ENCODE measurements at regions of chr11 and their contacts with region 1.

Region 1: GRCh38 chr11:9384535-9385303 is at the start of gene IPO7:
- DNase-seq: peak; percentile 89
- H3K4me3 Mint-ChIP-seq: peak within 1 kb of the TSS; percentile 89
- H3K27ac Mint-ChIP-seq: peak within 1 kb of the TSS; percentile 96
- H3K4me1 Mint-ChIP-seq: peaks cover 17% of the 10 kb centered on the region
- H3K27me3 Mint-ChIP-seq: no peaks in the 10 kb centered on the region
- CTCF ChIP-seq: peak; percentile 31
- total RNA-seq, gene IPO7: 139 and 170 TPM in 2 replicates

Region 2: DNA sequence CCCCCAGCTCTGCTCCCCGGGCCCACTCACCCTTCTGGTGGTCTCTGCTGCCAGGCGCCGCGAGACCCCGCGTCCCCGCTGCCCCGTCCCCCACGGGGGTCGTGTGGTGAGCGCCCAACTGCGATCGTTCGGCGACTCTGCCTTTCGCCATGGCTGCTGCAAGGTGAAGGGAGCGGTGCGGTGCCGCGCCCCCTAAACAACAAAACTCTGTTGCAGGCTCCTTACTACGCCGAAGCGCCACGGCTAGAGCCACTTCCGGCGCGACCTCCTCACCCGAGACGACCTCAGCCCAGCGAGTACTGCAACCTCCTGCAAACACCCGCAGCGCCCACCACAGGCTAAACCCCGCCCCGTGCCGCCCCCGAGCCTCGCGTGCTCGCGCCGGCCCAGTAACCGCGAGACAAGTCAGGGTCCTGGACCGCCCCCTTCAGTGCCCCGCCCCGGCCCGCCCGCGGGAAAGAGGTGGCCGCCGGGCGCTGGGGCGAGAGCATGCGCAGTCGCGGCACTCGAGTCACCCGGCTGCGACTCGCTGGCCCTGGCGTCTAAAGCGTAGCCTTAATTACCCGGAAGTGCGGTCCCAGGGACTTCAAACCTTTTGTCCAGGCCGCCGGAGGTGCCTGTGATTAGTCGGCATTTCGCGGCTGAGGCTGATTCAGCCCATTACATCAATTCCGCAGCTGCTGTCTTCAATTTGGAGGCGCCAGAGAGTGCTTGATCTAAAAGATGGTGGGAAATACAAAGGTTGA is 70.3 kb before region 1 on chr11 and contains the start of gene TMEM41B:
- CTCF ChIA-PET with region 1: interaction called, 9 read pairs
- intact Hi-C with region 1: loop called (anchors 5 kb)
- DNase-seq: peak; percentile 99
- H3K4me3 Mint-ChIP-seq: peak within 1 kb of the TSS; percentile 100
- H3K27ac Mint-ChIP-seq: peak within 1 kb of the TSS; percentile 96
- H3K4me1 Mint-ChIP-seq: peaks cover 34% of the 10 kb centered on the region
- H3K27me3 Mint-ChIP-seq: no peaks in the 10 kb centered on the region
- CTCF ChIP-seq: no peak
- total RNA-seq, gene TMEM41B: 71.8 and 72.0 TPM in 2 replicates

Region 3: GRCh38 chr11:9617940-9618339 is 233.2 kb after region 1 on chr11:
- CTCF ChIA-PET with region 1: no interaction called
- intact Hi-C with region 1: no loop called
- DNase-seq: no peak
- H3K4me3 Mint-ChIP-seq: no peak overlapping the region
- H3K27ac Mint-ChIP-seq: no peak overlapping the region
- H3K4me1 Mint-ChIP-seq: peaks cover 18% of the 10 kb centered on the region
- H3K27me3 Mint-ChIP-seq: no peaks in the 10 kb centered on the region
- CTCF ChIP-seq: no peak

Measured in Calu3 (cell line).